ENCODE measurements at regions of chr19 and their contacts with region 1.

Region 1: DNA sequence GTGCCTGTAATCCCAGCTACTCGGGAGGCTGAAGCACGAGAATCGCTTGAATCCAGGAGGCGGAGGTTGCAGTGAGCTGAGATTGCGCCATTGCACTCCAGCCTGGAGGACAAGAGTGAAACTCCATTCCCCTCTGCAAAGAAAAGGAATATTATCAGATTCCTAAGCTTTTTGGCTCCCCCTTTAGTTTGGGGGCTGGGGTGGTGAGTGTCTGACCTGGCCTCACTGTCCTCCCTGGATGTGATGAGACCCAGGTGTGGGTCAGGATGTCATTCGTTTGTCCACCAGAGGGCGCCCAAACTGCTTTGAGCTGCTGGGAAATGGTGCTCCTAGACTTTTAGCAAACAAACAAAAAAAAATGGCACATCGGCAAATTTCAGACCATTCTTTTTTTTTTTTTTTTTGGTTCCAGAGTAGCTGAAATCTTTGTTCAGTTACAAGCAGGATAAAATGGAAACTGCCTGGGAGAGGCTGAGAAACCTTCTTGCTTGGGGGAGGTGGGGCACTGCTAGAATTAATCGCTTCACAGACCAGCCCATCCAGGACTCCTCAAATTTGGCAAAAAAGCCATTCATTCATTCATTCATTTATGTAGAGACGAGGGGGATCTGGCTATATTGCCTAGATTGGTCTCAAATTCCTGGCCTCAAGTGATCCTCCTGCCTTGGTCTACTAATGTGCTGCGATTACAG is 29.4 kb downstream of the SPC24 start:
- DNase-seq: peak; percentile 88
- ATAC-seq: peak; percentile 78
- H3K4me3 Mint-ChIP-seq: no peak overlapping the region
- H3K27ac Mint-ChIP-seq: no peak overlapping the region
- H3K4me1 Mint-ChIP-seq: no peaks in the 10 kb centered on the region
- H3K27me3 Mint-ChIP-seq: no peaks in the 10 kb centered on the region

Region 2: DNA sequence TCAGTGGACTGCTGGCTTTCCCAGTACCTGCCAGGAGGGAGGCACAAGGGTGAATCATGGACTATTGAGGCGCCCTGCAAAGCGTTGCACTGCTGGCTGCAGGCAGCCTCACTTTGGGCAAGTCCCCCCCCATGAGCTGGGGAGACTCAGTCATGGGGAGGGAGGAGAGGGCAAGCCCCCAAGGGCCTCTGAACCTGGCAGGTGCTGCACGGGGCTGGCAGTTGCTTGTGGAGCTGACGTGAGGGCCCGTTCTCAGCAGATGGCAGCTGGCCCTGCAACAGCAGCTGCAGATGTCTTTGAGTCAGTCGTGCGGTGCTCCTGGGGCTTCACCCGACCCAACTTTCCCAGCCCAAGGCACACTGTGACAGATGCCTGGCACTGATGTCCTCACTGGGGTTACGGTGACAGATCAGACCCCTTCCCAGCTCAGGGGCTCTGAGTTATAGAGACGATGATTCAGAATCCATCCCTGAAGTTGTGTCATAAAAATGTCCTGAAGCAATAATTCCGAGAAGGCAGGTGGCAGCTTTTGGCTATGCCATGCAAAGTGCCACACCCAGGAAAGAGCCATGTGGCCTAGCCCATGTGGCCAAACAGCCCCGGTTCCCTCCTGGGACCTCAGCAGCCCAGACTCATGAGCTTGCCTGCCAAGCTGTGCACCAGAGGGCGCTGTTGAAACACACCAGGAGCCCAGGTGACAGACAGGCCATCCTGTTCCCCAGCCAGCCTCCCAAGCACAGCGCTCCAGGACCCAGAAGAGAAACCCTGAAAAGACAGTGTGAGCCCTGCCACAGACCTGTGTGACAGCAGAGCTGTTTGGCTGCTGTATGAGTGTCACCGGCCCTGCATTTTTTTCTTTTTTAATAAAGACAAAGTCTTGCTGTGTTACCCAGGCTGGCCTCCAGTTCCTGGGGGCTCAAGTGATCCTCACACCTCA is 90.4 kb before region 1 on chr19:
- CTCF ChIA-PET with region 1: interaction called, 14 read pairs
- POLR2A ChIA-PET with region 1: no interaction called
- intact Hi-C with region 1: loop called (anchors 1 kb)
- DNase-seq: peak; percentile 94
- ATAC-seq: peak; percentile 99
- H3K4me3 Mint-ChIP-seq: no peak overlapping the region
- H3K27ac Mint-ChIP-seq: peak overlapping the region; percentile 9
- H3K4me1 Mint-ChIP-seq: peaks cover 6% of the 10 kb centered on the region
- H3K27me3 Mint-ChIP-seq: no peaks in the 10 kb centered on the region

Region 3: GRCh38 chr19:11101057-11101456 is 25.1 kb before region 1 on chr19:
- CTCF ChIA-PET with region 1: interaction called, 11 read pairs
- POLR2A ChIA-PET with region 1: no interaction called
- intact Hi-C with region 1: no loop called
- DNase-seq: no peak
- ATAC-seq: no peak
- H3K4me3 Mint-ChIP-seq: no peak overlapping the region
- H3K27ac Mint-ChIP-seq: no peak overlapping the region
- H3K4me1 Mint-ChIP-seq: peaks cover 10% of the 10 kb centered on the region
- H3K27me3 Mint-ChIP-seq: no peaks in the 10 kb centered on the region